ENCODE measurements at regions of chr20 and their contacts with region 1.

Region 1: DNA sequence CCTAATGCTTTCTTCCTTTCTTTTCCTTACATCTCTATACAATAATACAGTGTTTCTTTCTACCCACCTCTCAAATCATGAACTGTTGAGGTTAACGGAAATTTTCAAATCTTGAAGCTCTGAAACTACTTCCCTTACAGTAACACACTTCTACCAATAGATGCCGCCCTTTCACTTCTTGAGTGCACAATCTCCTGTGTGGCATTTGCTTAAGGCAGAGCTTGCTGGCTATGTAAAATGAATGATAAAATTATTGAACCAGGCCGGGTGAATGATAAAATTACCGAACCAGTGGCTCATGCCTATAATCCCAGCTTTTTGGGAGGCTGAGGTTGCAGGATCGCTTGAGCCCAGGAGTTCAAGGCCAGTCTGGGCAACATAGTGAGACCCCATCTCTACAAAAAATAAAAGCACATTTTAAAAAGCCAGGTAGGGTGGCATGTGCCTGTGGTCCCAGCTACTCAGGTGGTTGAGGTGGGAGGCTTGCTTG is 56.8 kb downstream of the KCNS1 start:
- DNase-seq: peak; percentile 59
- H3K4me3 Mint-ChIP-seq: no peak overlapping the region
- H3K27ac Mint-ChIP-seq: peak overlapping the region; percentile 90
- H3K4me1 Mint-ChIP-seq: peaks cover 76% of the 10 kb centered on the region
- H3K27me3 Mint-ChIP-seq: no peaks in the 10 kb centered on the region

Region 2: GRCh38 chr20:45011108-45011526 is 33.0 kb before region 1 on chr20:
- CTCF ChIA-PET with region 1: interaction called, 15 read pairs
- intact Hi-C with region 1: loop called (anchors 2 kb)
- DNase-seq: peak; percentile 75
- H3K4me3 Mint-ChIP-seq: no peak overlapping the region
- H3K27ac Mint-ChIP-seq: no peak overlapping the region
- H3K4me1 Mint-ChIP-seq: peaks cover 47% of the 10 kb centered on the region
- H3K27me3 Mint-ChIP-seq: no peaks in the 10 kb centered on the region

Region 3: GRCh38 chr20:45028424-45029136 is 15.5 kb before region 1 on chr20:
- CTCF ChIA-PET with region 1: interaction called, 21 read pairs
- intact Hi-C with region 1: loop called (anchors 2 kb)
- DNase-seq: peak; percentile 25
- H3K4me3 Mint-ChIP-seq: no peak overlapping the region
- H3K27ac Mint-ChIP-seq: peak overlapping the region; percentile 72
- H3K4me1 Mint-ChIP-seq: peaks cover 68% of the 10 kb centered on the region
- H3K27me3 Mint-ChIP-seq: no peaks in the 10 kb centered on the region

Region 4: GRCh38 chr20:45070932-45071632 is 27.0 kb after region 1 on chr20:
- CTCF ChIA-PET with region 1: interaction called, 17 read pairs
- intact Hi-C with region 1: no loop called
- DNase-seq: no peak
- H3K4me3 Mint-ChIP-seq: no peak overlapping the region
- H3K27ac Mint-ChIP-seq: peak overlapping the region; percentile 46
- H3K4me1 Mint-ChIP-seq: peaks cover 45% of the 10 kb centered on the region
- H3K27me3 Mint-ChIP-seq: no peaks in the 10 kb centered on the region

Region 5: GRCh38 chr20:45293041-45294002 is 249.2 kb after region 1 on chr20:
- CTCF ChIA-PET with region 1: interaction called, 12 read pairs
- intact Hi-C with region 1: loop called (anchors 2 kb)
- DNase-seq: peak; percentile 90
- H3K4me3 Mint-ChIP-seq: peak overlapping the region; percentile 72
- H3K27ac Mint-ChIP-seq: no peak overlapping the region
- H3K4me1 Mint-ChIP-seq: peaks cover 4% of the 10 kb centered on the region
- H3K27me3 Mint-ChIP-seq: peaks cover 33% of the 10 kb centered on the region